Endothelial cell of umbilical vein (primary cell): ENCODE measurements at regions of chr3 and their contacts with region 1.

Region 1: DNA sequence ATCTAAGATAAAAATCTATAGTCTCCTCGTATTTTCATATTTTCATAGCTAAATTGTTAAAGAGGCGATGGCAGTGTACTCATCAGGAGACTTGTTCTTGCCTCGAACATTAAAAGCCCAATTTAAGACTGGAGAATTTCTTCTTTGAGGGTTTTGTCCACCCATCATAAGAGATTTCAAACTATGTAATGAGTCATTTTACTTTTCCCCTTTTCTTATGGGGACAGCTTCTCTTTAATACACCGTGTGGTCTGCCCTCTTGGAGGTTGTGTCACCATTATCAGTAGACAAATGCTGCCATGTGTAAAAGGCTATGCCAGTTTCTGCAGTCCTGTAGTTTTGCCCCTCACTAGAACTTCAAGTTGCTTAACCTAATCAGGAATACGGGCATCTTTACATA is 16.9 kb downstream of the TGFBR2 start:
- DNase-seq: no peak
- H3K4me3 ChIP-seq: no peak overlapping the region
- H3K27ac ChIP-seq: no peak overlapping the region
- H3K4me1 ChIP-seq: peaks cover 83% of the 10 kb centered on the region
- H3K27me3 ChIP-seq: no peaks in the 10 kb centered on the region
- CTCF ChIP-seq: no peak
- POLR2A ChIP-seq: no peak

Region 2: DNA sequence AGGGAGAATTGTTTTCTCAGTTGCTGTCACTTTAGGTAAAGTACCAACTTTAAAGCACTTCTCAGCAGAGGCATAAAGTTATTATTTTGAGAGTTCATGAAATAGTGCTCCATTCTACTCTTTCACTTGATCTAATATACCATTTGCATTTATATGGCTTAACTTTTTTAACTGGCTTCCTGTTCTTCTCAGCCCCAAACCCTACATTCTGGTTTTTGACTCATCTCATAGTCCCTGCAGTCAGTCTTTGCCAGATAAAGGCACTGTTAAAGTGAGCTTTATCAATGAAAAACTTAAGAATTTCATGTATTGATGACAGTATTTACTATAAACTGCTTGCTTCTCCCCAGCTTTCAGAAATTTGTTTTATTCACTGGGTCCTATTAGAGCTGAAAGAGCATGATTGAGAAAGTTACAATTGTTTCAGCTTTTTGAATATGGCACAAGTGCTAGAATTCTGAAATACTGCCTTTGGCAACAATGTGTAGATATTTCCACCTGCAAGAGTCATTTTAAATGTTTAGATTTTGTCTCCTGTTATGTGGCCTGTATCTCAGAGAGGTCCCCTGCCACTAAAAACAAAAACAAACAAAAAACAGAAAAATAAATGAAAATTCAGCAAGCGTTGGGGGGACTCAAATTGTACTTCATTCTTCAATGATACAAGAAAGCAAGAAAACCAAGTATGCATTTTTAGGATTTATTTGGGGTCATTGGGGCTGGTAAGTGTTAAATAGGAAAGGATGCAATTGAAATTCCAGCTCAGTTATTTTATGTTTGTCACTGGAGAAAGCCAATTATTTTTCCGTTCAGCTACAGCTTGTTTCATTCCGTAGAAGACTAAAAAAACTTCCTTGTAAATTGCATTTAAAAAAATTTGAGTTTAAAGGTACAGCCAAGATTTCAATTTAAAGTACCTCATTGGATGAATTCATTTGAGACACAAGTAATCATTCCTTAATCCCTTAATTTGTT is 11.7 kb after region 1 on chr3:
- CTCF ChIA-PET with region 1: no interaction called
- POLR2A ChIA-PET with region 1: interaction called, 11 read pairs
- dilution Hi-C with region 1: no loop called
- intact Hi-C with region 1: no loop called
- DNase-seq: no peak
- H3K4me3 ChIP-seq: no peak overlapping the region
- H3K27ac ChIP-seq: no peak overlapping the region
- H3K4me1 ChIP-seq: peaks cover 55% of the 10 kb centered on the region
- H3K27me3 ChIP-seq: no peaks in the 10 kb centered on the region
- CTCF ChIP-seq: no peak
- POLR2A ChIP-seq: no peak